Cardiac septum (tissue), 1 donor: ENCODE measurements at regions of chr2 and their contacts with region 1.

Region 1: GRCh38 chr2:67476809-67477790 is 80.0 kb downstream of the ETAA1 start:
- DNase-seq: no peak

Region 2: GRCh38 chr2:66587216-66587615 is 889.9 kb before region 1 on chr2:
- intact Hi-C with region 1: loop called (anchors 10 kb)
- DNase-seq: no peak

Region 3: GRCh38 chr2:67329513-67329912 is 147.6 kb before region 1 on chr2:
- intact Hi-C with region 1: no loop called
- DNase-seq: no peak

Region 4: GRCh38 chr2:67840460-67841068 is 363.5 kb after region 1 on chr2:
- intact Hi-C with region 1: loop called (anchors 10 kb)
- DNase-seq: peak; percentile 78

Region 5: DNA sequence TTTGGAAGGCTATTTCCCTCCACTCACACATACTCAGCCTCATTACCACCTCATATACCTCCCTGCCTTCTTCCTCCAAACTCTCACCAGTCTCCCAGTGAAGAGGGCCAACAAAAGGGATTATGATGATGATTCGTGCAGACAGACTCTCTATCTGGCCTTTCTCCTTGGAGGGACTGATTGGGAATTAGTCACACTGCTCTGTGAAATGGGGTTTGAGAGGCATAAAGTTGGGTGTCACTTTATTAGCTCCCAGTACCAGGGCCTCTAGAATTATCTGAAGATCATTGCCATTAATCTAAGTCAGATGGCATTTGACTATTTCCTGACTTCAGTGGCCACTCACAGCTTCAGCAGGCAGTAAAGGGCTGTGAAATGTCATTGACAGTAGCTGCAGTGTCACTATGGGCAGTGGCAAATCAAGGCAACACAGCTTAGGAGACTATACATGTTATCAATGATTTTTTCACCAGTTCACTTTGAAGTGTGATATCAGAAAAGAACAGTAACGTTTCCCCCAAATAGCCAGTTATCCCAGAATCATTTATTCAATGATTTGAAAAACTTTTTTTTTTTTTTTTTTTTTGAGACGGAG is 825.3 kb after region 1 on chr2:
- intact Hi-C with region 1: no loop called
- DNase-seq: no peak